ENCODE measurements at regions of chr5 and their contacts with region 1.

Region 1: DNA sequence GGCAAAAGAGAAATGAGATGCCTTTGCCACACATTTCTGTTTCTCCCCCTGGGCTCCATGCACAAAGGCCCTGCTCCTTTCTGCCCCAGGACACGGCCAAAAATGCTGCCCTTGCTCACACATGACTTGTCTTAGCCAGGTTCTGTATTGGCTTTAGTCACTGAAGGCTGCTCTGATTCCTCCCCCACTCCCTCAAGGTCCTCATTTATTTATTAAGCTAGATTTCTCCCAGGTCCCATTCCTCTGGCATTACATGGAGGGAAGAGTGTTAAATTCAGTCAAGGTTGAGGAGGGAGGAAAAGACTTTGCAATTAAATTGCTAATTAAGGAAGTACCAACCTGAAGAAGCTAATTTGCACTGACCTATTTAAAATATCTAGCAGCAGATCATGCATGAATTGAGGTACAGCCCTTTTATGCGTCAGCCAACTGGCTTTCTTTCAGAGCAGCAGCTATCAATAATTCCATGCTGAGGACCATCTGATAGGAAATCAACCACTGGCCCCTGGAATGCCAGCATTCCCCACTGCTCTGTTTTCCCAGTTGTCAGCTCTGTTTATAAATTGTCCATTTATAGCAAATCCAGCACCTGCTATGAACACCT is 81.2 kb upstream of the MAP3K1 start:
- H3K4me3 Mint-ChIP-seq: no peak overlapping the region
- H3K27ac Mint-ChIP-seq: no peak overlapping the region
- H3K4me1 Mint-ChIP-seq: peaks cover 69% of the 10 kb centered on the region
- H3K27me3 Mint-ChIP-seq: no peaks in the 10 kb centered on the region

Region 2: GRCh38 chr5:56814963-56815658 is 80.9 kb after region 1 on chr5 and contains the start of gene MAP3K1:
- intact Hi-C with region 1: loop called (anchors 5 kb)
- H3K4me3 Mint-ChIP-seq: peak within 1 kb of the TSS; percentile 96
- H3K27ac Mint-ChIP-seq: peak within 1 kb of the TSS; percentile 96
- H3K4me1 Mint-ChIP-seq: peaks cover 31% of the 10 kb centered on the region
- H3K27me3 Mint-ChIP-seq: no peaks in the 10 kb centered on the region

Measured in dendritic cell treated with granulocyte-macrophage colony-stimulating factor and Interleukin-4, amounts not matched to agents 40 ng/mL and 50 ng/mL, for 4 days (primary cell).